OCI-LY7 (cell line): ENCODE measurements at regions of chr5 and their contacts with region 1.

Region 1: GRCh38 chr5:90529194-90529938 is at the start of gene LYSMD3:
- DNase-seq: peak; percentile 97
- H3K4me3 ChIP-seq: peak within 1 kb of the TSS; percentile 93
- H3K27ac ChIP-seq: peak within 1 kb of the TSS; percentile 57
- H3K4me1 ChIP-seq: peaks cover 30% of the 10 kb centered on the region
- CTCF ChIP-seq: no peak
- total RNA-seq, gene LYSMD3: 5.7 and 9.5 TPM in 2 replicates

Region 2: DNA sequence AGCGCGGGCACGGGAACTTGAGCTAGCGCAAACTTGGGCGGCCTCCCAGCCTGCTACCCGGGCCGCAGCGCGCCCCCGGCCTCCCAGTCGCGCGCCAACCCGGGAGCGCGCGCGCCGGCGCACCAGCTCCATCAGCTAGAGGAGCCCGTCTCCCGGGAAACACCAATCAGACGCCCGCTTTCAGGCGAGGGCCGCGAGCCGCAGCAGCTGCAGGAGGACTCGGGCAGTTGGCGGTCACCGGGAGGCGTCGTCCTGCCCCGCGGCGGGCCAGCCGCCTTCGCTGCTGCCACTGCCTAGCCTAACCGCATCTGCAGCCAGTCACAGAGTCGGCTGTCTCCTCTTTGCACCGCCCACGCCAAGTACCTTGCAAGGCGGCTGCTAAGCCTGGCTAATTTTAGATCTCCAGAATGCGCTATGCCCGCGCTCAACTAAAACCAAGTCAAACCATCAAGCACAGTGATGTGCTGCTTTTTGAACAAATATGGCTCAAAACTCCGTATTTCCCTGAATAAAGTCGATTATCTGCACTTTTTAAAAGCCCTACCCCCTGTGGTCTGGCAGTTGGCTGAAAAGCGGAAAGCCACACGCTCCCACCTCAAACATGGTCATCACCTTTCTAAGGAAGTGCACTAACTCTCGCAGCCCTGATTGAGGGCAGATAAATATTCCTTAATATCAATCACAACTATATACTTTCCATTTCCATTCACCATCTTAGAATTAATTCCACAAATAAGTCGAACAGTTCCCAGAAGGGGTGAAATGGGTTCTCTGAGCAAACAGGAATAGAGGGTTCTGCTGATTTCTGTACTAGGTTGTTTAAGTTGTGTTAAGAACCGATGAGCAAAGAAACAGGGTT is 1868.2 kb before region 1 on chr5:
- CTCF ChIA-PET with region 1: no interaction called
- POLR2A ChIA-PET with region 1: no interaction called
- intact Hi-C with region 1: loop called (anchors 5 kb)
- DNase-seq: peak; percentile 83
- H3K4me3 ChIP-seq: peak overlapping the region; percentile 68
- H3K27ac ChIP-seq: no peak overlapping the region
- H3K4me1 ChIP-seq: peaks cover 30% of the 10 kb centered on the region
- CTCF ChIP-seq: no peak

Region 3: DNA sequence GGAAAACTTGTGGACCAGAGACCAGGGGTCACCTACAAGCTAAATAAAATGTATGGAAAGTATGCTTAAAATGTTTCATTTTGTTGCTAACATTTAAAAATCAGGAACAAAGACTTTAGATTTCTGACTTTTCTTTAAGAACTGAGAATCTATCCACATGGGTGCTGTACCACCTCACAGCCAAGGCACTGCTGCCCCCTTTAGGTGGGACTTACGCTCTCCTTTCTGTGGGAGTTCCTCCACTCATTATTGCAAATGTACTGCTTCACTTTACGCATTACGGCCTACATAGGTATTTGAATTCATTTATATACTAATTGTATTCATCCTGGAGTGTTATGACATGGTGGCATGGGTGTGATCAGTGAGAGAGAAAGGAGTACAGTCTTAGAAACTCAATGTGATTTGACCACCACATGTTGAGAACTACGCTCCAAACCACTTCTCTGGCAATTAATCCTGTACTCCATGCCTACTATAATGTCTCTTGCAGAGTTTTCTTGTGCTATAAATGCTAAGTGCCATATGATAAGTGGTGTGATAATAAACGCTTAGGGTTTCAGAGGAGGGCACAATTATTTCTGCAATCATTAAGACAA is 95.2 kb before region 1 on chr5:
- CTCF ChIA-PET with region 1: no interaction called
- POLR2A ChIA-PET with region 1: interaction called, 5 read pairs
- intact Hi-C with region 1: loop called (anchors 1 kb)
- DNase-seq: peak; percentile 55
- H3K4me3 ChIP-seq: no peak overlapping the region
- H3K27ac ChIP-seq: no peak overlapping the region
- H3K4me1 ChIP-seq: no peaks in the 10 kb centered on the region
- CTCF ChIP-seq: peak; percentile 89

Region 4: GRCh38 chr5:90446961-90447360 is 82.4 kb before region 1 on chr5:
- CTCF ChIA-PET with region 1: no interaction called
- POLR2A ChIA-PET with region 1: interaction called, 10 read pairs
- intact Hi-C with region 1: no loop called
- DNase-seq: no peak
- H3K4me3 ChIP-seq: no peak overlapping the region
- H3K27ac ChIP-seq: no peak overlapping the region
- H3K4me1 ChIP-seq: no peaks in the 10 kb centered on the region
- CTCF ChIP-seq: no peak

Region 5: DNA sequence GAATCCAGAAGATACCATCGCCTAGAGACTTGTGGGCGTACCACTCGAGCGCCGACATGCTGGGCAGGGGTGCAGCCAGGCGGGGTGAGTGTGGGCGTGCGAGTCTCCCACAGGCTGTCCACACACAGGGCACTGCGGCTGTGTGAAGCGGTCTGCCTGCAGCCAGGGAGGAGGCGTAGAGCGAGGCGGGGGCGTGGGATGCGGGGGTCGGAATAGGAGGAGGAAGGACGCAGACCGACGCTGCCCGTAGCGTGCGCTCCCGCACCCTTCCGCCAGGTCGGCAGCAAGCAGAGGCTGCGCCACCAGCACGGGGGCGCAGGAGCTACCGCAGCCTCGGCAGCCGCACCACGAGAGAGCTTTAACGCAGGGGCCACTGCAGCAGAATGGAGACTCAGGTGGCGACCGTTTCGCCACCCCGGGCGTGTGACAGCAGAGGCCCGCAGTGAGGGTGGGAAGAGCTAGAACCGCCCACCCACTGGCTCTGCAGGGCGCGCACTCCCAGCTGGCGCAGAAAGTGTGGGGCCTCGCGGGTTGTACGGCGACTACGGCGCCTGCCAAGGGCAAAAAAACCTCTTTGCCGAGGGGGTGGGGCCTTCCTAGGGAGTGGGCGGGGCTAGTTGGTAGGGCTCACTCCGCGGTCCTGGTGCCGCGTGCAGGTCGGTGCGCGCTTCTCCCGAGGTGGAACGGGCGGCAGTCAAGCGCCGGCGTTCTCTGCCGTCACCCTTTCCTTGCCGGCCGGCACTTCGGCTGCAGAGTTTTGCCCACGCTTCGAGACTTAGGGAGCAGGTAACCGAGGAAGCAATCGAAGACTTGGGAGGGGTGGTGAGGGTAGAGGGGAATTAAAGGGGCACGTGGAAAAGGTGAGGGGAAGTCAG is 54.9 kb before region 1 on chr5 and contains the starts of genes MBLAC2 and POLR3G:
- CTCF ChIA-PET with region 1: interaction called, 3 read pairs
- POLR2A ChIA-PET with region 1: interaction called, 10 read pairs
- intact Hi-C with region 1: loop called (anchors 1 kb)
- DNase-seq: peak; percentile 93
- H3K4me3 ChIP-seq: peak within 1 kb of the TSS; percentile 80
- H3K27ac ChIP-seq: peak within 1 kb of the TSS; percentile 59
- H3K4me1 ChIP-seq: peaks cover 41% of the 10 kb centered on the region
- CTCF ChIP-seq: peak; percentile 45
- total RNA-seq, gene MBLAC2: 9.1 and 9.4 TPM in 2 replicates
- total RNA-seq, gene POLR3G: 9.9 and 14.6 TPM in 2 replicates